Right ventricle myocardium inferior (tissue), 1 donor: ENCODE measurements at regions of chr14 and their contacts with region 1.

Region 1: DNA sequence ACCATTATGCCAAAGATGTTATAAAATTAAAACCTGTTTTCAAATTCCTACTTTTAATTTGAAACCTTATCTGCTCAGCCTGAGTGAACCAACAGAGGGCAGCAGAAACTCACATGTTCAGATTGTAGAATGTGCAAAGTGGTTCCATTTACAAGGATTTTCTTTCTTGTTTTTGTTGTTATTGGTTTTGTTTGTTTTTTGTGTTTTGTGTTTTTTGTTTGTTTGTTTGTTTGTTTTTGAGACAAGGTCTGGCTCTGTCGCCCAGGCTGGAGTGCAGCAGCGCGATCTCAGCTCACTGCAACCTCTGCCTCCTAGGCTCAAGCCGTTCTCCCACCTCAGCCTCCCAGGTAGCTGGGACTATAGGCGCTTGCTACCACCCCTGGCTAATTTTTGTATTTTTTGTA is 22.8 kb upstream of the GARIN2 start:
- DNase-seq: no peak
- ATAC-seq: no peak

Region 2: DNA sequence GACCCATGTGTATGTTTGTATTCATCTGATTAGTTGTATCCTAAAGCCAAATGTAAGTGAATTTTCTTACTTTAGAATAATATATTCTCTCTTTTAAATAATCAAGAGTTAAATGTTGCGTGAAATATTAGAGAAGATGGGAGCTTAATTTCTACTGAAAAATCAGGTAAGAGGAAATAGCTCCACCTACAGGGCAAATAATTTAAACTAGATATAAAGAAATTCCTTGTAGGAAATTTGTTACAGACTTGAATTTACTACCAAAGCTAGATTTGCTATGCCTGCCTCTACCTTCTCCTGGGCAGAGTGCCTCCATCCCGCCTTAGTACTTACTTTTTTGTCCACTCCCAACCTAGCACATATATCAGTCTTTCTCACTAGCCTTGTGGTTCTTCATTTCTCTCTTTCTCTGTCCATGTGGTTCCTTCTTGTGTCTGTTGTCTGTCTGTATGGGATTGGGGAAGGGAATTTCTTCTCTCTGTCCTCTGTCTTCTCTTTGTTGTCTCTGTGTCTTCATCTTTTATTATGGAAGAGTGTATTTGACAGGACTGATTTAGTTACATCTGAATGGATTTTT is 119.5 kb after region 1 on chr14:
- intact Hi-C with region 1: loop called (anchors 1 kb)
- DNase-seq: no peak
- ATAC-seq: no peak

Region 3: GRCh38 chr14:68124979-68125731 is 958.7 kb after region 1 on chr14:
- intact Hi-C with region 1: no loop called
- DNase-seq: no peak
- ATAC-seq: no peak